HCT116 (cell line): ENCODE measurements at regions of chr7 and their contacts with region 1.

Region 1: GRCh38 chr7:33050535-33051318 is 11.8 kb downstream of the NT5C3A start:
- DNase-seq: peak; percentile 13
- ATAC-seq: peak; percentile 71
- H3K4me3 ChIP-seq: no peak overlapping the region
- H3K27ac ChIP-seq: no peak overlapping the region
- H3K4me1 ChIP-seq: peaks cover 0 to 8% of the 10 kb centered on the region in 2 experiments; a peak in 2 of 4 replicates
- H3K27me3 ChIP-seq: no peaks in the 10 kb centered on the region
- CTCF ChIP-seq: peak; percentile 64 to 70 (median 66); a peak in 5 of 6 replicates
- POLR2A ChIP-seq: no peak
- RAD21 ChIP-seq: peak; percentile 75

Region 2: DNA sequence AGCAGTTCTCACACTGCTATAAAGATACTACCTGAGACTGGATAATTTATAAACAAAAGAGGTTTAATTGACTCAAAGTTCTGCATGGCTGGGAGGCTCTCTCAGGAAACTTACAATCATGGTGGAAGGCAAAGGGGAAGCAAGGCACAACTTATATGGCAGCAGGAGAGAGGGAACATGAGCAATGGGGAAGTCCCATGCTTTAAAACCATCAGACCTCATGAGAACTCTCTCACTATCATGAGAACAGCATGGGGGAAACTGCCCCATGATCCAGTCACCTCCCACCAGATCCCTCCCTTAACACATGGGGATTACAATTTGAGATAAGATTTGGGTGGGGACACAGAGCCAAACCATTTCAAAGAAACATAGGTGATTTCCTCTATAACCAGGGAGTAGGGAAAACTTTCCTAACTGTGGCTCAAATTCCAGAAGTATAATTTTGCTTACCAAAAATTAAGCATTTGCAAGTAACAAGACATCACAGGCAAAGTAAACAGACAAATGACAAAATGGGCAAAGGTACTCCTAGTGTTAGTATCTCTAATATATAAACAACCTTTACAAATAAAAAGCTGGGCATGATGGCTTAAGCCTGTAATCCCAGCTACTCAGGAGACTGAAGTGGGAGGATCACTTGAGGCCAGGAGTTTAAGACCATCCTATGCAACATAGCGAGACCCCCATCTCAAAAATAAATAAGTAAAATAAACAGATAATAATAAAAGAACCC is 247.2 kb before region 1 on chr7:
- CTCF ChIA-PET with region 1: interaction called, 3 read pairs
- POLR2A ChIA-PET with region 1: no interaction called
- RAD21 ChIA-PET with region 1: no interaction called
- intact Hi-C with region 1: loop called (anchors 1 kb)
- DNase-seq: no peak
- ATAC-seq: no peak
- H3K4me3 ChIP-seq: no peak overlapping the region
- H3K27ac ChIP-seq: no peak overlapping the region
- H3K4me1 ChIP-seq: no peaks in the 10 kb centered on the region
- H3K27me3 ChIP-seq: no peaks in the 10 kb centered on the region
- CTCF ChIP-seq: no peak
- POLR2A ChIP-seq: no peak
- RAD21 ChIP-seq: no peak

Region 3: GRCh38 chr7:33201821-33202220 is 151.1 kb after region 1 on chr7:
- CTCF ChIA-PET with region 1: no interaction called
- POLR2A ChIA-PET with region 1: no interaction called
- RAD21 ChIA-PET with region 1: no interaction called
- intact Hi-C with region 1: no loop called
- DNase-seq: no peak
- ATAC-seq: no peak
- H3K4me3 ChIP-seq: no peak overlapping the region
- H3K27ac ChIP-seq: no peak overlapping the region
- H3K4me1 ChIP-seq: no peaks in the 10 kb centered on the region
- H3K27me3 ChIP-seq: no peaks in the 10 kb centered on the region
- CTCF ChIP-seq: no peak
- POLR2A ChIP-seq: no peak
- RAD21 ChIP-seq: no peak

Region 4: DNA sequence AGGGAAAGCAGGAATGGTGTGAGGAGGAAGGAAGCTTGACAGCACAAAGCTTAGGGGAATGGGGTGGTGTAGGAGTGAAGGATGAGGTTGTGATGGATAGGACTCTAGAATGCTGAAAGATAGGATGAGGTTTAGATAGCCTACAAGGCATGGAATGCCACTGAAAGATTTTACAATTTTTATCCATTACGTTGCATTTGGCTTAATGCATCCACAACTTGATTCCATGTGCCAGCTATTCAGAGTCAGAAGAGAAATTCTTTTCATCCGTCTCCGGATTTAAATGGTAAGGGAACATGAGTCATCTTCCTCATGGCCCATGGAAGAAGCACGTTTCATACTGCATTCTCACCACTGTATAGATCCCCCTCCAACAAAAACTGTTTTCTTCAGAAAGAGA is 642.2 kb after region 1 on chr7:
- CTCF ChIA-PET with region 1: no interaction called
- POLR2A ChIA-PET with region 1: no interaction called
- RAD21 ChIA-PET with region 1: no interaction called
- intact Hi-C with region 1: no loop called
- DNase-seq: no peak
- ATAC-seq: no peak
- H3K4me3 ChIP-seq: no peak overlapping the region
- H3K27ac ChIP-seq: no peak overlapping the region
- H3K4me1 ChIP-seq: no peaks in the 10 kb centered on the region
- H3K27me3 ChIP-seq: no peaks in the 10 kb centered on the region
- CTCF ChIP-seq: no peak
- POLR2A ChIP-seq: no peak
- RAD21 ChIP-seq: no peak